ENCODE measurements at regions of chr21 and their contacts with region 1.

Region 1: GRCh38 chr21:25607151-25608043 is at the start of gene MRPL39:
- DNase-seq: peak; percentile 78
- H3K4me3 ChIP-seq: peak within 1 kb of the TSS; percentile 60 to 97 (median 97)
- H3K27ac ChIP-seq: peak within 1 kb of the TSS; percentile 68
- H3K4me1 ChIP-seq: peaks cover 10% of the 10 kb centered on the region
- H3K27me3 ChIP-seq: no peaks in the 10 kb centered on the region
- CTCF ChIP-seq: peak; percentile 55 to 68
- POLR2A ChIP-seq: peak; percentile 73
- total RNA-seq, gene MRPL39: 25.2 and 28.1 TPM in 2 replicates

Region 2: DNA sequence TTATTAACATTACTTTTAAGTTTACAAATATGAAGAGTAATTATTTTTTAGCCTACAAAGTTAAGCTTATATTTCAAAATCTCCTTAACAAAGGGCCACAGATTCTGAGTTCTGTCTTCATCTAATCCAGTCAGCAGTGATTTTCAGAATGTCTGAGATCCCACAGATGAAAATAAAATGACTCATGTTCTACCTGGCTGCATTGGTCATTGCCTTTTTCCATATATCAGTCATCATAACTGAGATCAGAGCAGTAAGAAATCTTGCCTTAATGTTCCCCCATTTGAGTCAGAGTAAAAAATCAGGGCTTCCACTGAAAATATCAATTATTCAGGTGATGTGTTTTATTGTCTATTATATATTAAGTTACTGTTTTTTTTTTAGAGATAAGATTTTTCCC is 416.3 kb before region 1 on chr21:
- CTCF ChIA-PET with region 1: no interaction called
- POLR2A ChIA-PET with region 1: no interaction called
- dilution Hi-C with region 1: no loop called
- intact Hi-C with region 1: no loop called
- DNase-seq: no peak
- H3K4me3 ChIP-seq: no peak overlapping the region
- H3K27ac ChIP-seq: no peak overlapping the region
- H3K4me1 ChIP-seq: no peaks in the 10 kb centered on the region
- H3K27me3 ChIP-seq: no peaks in the 10 kb centered on the region
- CTCF ChIP-seq: no peak
- POLR2A ChIP-seq: no peak

Region 3: GRCh38 chr21:25421327-25422028 is 185.9 kb before region 1 on chr21:
- CTCF ChIA-PET with region 1: interaction called, 3 read pairs
- POLR2A ChIA-PET with region 1: no interaction called
- dilution Hi-C with region 1: no loop called
- intact Hi-C with region 1: loop called (anchors 1 kb)
- DNase-seq: peak; percentile 60
- H3K4me3 ChIP-seq: no peak overlapping the region
- H3K27ac ChIP-seq: no peak overlapping the region
- H3K4me1 ChIP-seq: no peaks in the 10 kb centered on the region
- H3K27me3 ChIP-seq: no peaks in the 10 kb centered on the region
- CTCF ChIP-seq: peak; percentile 29 to 59
- POLR2A ChIP-seq: no peak

Region 4: DNA sequence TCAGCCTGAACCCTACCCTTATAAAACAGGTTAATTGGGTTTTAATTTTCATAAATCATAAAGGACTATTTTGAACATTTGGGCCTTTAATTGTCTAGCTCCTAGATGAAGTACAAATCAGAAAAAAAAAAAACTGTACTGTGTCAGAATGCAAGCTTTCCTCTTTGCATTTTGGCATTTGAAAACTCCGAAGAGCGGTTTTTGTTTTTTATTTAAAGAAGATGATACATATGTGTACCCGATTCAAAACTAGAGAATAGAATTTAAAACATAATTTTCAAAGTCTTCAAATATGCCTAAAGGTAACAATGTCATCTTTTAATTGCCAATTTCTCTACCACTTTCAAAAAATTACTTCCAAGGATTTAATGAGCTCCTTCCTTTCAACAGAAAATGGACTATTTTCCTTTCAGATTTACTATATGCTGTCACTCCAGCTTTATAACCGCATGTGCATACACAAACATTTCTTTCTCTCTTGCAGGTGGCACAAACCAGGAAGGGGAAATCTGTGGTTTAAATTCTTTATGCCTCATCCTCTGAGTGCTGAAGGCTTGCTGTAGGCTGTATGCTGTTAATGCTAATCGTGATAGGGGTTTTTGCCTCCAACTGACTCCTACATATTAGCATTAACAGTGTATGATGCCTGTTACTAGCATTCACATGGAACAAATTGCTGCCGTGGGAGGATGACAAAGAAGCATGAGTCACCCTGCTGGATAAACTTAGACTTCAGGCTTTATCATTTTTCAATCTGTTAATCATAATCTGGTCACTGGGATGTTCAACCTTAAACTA is 33.8 kb before region 1 on chr21:
- CTCF ChIA-PET with region 1: interaction called, 5 read pairs
- POLR2A ChIA-PET with region 1: no interaction called
- dilution Hi-C with region 1: no loop called
- intact Hi-C with region 1: loop called (anchors 2 kb)
- DNase-seq: peak; percentile 86
- H3K4me3 ChIP-seq: peak overlapping the region in 1 of 3 experiments; percentile 34
- H3K27ac ChIP-seq: peak overlapping the region; percentile 80
- H3K4me1 ChIP-seq: peaks cover 27% of the 10 kb centered on the region
- H3K27me3 ChIP-seq: no peaks in the 10 kb centered on the region
- CTCF ChIP-seq: no peak
- POLR2A ChIP-seq: no peak

Region 5: GRCh38 chr21:25708467-25709065 is 101.2 kb after region 1 on chr21:
- CTCF ChIA-PET with region 1: interaction called, 29 read pairs
- POLR2A ChIA-PET with region 1: no interaction called
- dilution Hi-C with region 1: no loop called
- intact Hi-C with region 1: loop called (anchors 1 kb)
- DNase-seq: peak; percentile 56
- H3K4me3 ChIP-seq: no peak overlapping the region
- H3K27ac ChIP-seq: no peak overlapping the region
- H3K4me1 ChIP-seq: no peaks in the 10 kb centered on the region
- H3K27me3 ChIP-seq: no peaks in the 10 kb centered on the region
- CTCF ChIP-seq: peak; percentile 57 to 65
- POLR2A ChIP-seq: no peak

Region 6: GRCh38 chr21:25801217-25802014 is 194.0 kb after region 1 on chr21:
- CTCF ChIA-PET with region 1: interaction called, 16 read pairs
- POLR2A ChIA-PET with region 1: no interaction called
- dilution Hi-C with region 1: no loop called
- intact Hi-C with region 1: loop called (anchors 1 kb)
- DNase-seq: peak; percentile 82
- H3K4me3 ChIP-seq: no peak overlapping the region
- H3K27ac ChIP-seq: no peak overlapping the region
- H3K4me1 ChIP-seq: no peaks in the 10 kb centered on the region
- H3K27me3 ChIP-seq: peaks cover 6 to 17% of the 10 kb centered on the region in 2 experiments
- CTCF ChIP-seq: peak; percentile 99 to 100
- POLR2A ChIP-seq: no peak

Region 7: GRCh38 chr21:25831300-25831960 is 224.0 kb after region 1 on chr21:
- CTCF ChIA-PET with region 1: no interaction called
- POLR2A ChIA-PET with region 1: no interaction called
- dilution Hi-C with region 1: no loop called
- intact Hi-C with region 1: no loop called
- DNase-seq: no peak
- H3K4me3 ChIP-seq: no peak overlapping the region
- H3K27ac ChIP-seq: no peak overlapping the region
- H3K4me1 ChIP-seq: no peaks in the 10 kb centered on the region
- H3K27me3 ChIP-seq: no peaks in the 10 kb centered on the region
- CTCF ChIP-seq: no peak
- POLR2A ChIP-seq: no peak

Region 8: DNA sequence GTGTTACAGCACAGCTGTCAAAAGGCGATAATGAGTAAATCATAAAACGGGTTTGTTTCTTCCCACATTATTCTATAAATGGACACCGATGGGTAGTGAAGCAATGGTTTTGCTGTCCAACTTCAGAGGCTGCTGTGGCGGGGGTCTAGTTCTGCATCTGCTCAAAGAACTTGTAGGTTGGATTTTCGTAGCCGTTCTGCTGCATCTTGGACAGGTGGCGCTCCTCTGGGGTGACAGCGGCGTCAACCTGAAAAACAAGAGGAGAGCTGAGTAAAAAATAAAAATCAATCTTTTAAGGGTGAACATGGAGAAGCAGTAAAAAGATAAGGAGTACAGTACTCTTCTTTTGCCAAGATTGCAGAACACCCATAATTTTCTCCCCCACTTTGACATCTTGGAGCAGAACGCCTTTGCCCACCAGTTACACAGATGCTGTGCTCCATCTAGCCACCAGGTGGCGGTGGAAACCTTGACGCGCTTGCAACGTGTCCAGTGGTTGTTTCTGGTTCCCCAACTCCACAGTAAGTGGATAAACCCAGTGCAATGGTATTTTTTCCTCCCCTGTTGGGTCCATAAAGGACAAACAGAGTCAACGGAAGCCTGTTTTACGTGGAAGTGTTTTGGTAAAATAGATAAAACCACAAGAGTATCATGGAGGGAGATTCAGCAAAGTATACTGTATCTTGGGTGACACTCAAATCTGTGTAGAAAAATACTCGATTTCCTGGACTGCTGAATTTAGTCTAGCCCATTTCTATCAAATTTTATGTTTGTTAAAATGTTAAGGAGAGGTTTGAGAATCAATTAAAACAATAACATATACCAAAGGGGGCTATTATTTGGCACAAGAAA is 274.4 kb after region 1 on chr21:
- CTCF ChIA-PET with region 1: no interaction called
- POLR2A ChIA-PET with region 1: no interaction called
- dilution Hi-C with region 1: no loop called
- intact Hi-C with region 1: loop called (anchors 5 kb)
- DNase-seq: peak; percentile 65
- H3K4me3 ChIP-seq: no peak overlapping the region
- H3K27ac ChIP-seq: no peak overlapping the region
- H3K4me1 ChIP-seq: peaks cover 23% of the 10 kb centered on the region
- H3K27me3 ChIP-seq: no peaks in the 10 kb centered on the region
- CTCF ChIP-seq: peak; percentile 87 to 89
- POLR2A ChIP-seq: no peak

Region 9: DNA sequence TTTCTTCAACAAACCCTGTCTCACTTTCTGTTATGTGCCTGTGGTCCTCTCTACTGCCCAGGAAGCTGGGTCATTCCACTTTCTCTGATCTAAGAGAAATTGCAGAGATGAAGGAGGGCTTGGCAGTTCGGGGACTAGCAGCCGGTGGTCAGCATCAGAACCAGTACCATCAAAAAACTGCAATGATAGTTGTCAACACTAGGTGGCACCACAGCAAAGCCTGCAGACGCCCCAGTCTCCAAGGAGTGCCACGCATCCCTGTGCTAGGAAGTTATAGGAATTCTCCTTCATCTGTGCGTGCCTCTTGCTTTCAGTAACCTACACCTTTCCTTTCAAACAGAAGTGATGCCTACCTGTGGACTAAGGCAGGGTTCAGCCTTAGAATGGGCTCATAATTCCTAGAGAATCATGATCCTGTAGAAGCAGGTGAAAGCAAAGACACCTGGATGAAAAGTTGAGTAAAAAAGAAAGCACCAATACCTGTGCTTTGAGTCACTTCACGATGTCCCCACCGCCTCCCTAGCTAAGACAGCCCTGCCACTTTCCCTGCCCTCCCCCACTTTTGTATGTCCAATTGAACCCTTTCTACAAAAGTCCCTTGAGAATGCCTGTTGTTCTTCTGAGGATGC is 1108.6 kb after region 1 on chr21:
- CTCF ChIA-PET with region 1: interaction called, 10 read pairs
- POLR2A ChIA-PET with region 1: no interaction called
- dilution Hi-C with region 1: no loop called
- intact Hi-C with region 1: loop called (anchors 1 kb)
- DNase-seq: peak; percentile 55
- H3K4me3 ChIP-seq: no peak overlapping the region
- H3K27ac ChIP-seq: no peak overlapping the region
- H3K4me1 ChIP-seq: no peaks in the 10 kb centered on the region
- H3K27me3 ChIP-seq: no peaks in the 10 kb centered on the region
- CTCF ChIP-seq: peak; percentile 81 to 89
- POLR2A ChIP-seq: no peak